ENCODE measurements at regions of chr1 and their contacts with region 1.

Region 1: DNA sequence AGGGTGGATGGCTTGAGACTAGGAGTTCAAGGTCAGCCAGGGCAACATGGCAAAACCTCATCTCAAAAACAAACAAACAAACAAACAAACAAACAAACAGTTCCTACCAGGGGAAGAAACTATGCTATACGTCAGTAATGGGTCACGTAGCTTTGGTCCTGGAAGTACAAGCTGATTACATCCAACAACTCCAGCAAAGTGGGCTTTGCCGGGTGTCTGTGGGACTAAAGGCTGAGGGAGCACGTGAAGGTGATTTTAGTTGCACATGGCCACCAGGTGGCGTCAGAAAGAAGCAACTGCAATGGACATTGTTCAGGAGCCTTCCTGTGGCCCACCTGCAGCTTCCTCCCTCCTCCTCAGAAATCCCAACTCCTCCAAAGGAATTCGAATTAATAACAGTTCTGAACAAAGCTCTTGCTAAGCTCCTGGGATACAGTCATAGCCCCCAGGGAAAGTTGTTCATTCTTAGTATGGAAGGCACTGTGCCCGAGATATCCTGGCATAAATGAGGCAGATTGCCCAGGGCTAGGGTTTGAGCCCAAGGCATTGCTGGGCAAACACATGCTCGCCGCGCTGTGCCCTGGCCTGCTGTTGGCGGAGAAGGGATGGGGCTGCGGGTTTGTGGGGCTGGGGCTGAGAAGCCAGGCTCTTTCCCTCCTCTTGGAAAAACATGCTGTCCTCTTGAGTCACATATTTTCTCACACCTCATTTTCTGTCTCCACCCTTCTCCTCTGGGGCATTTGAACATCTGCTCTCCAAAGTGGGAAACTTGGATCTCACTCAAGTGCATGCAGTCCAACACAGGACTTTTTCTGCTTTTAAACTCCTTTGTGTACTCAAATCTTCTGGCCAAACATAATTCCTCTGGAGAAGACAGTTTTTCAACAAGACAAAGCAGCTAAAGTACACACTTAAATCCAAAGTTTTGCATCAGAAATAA is 28.6 kb downstream of the AKNAD1 start:
- DNase-seq: peak; percentile 96
- H3K4me3 Mint-ChIP-seq: peak overlapping the region; percentile 59
- H3K27ac Mint-ChIP-seq: peak overlapping the region; percentile 94
- H3K4me1 Mint-ChIP-seq: peaks cover 47% of the 10 kb centered on the region
- H3K27me3 Mint-ChIP-seq: no peaks in the 10 kb centered on the region
- CTCF ChIP-seq: peak; percentile 75

Region 2: DNA sequence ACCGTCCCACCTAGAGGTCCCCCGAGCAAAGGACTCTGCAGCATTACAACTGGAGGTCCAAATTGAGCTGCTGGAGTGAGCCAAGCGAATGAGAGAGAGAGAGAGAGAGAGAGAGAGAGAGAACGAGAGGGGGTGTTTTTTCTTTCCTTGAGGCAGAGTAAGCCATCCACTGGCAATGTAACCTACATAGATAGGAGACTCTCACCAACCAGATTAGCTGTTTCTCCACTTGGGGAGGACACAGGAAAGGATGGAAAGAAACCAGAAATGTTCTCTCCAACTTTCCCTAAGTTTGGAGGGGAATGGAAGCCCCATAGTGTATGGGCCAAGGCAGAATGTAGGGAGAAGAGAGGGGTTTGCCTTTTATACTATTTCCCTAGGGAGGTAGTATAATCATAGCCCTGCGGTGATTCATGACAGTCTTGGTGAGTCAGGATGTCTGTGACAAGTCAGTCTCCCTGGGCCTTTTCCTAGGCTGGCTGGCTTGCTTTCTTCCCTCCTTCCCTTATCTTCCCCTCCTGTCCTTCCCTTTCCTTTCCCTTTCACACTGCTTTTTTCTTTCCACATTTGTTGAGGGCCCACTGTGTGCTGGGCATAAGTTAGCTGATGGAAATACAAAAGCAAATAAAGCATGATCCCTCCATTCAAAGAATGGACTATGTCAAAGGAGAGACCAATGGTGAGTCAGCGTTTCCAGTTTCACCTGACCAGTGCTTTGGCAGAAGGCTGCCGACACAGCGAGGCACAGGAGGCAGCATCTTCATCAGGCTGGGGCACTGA is 108.4 kb before region 1 on chr1:
- CTCF ChIA-PET with region 1: no interaction called
- POLR2A ChIA-PET with region 1: no interaction called
- intact Hi-C with region 1: no loop called
- DNase-seq: peak; percentile 88
- H3K4me3 Mint-ChIP-seq: peak overlapping the region; percentile 10
- H3K27ac Mint-ChIP-seq: peak overlapping the region; percentile 78
- H3K4me1 Mint-ChIP-seq: peaks cover 17% of the 10 kb centered on the region
- H3K27me3 Mint-ChIP-seq: no peaks in the 10 kb centered on the region
- CTCF ChIP-seq: no peak

Region 3: DNA sequence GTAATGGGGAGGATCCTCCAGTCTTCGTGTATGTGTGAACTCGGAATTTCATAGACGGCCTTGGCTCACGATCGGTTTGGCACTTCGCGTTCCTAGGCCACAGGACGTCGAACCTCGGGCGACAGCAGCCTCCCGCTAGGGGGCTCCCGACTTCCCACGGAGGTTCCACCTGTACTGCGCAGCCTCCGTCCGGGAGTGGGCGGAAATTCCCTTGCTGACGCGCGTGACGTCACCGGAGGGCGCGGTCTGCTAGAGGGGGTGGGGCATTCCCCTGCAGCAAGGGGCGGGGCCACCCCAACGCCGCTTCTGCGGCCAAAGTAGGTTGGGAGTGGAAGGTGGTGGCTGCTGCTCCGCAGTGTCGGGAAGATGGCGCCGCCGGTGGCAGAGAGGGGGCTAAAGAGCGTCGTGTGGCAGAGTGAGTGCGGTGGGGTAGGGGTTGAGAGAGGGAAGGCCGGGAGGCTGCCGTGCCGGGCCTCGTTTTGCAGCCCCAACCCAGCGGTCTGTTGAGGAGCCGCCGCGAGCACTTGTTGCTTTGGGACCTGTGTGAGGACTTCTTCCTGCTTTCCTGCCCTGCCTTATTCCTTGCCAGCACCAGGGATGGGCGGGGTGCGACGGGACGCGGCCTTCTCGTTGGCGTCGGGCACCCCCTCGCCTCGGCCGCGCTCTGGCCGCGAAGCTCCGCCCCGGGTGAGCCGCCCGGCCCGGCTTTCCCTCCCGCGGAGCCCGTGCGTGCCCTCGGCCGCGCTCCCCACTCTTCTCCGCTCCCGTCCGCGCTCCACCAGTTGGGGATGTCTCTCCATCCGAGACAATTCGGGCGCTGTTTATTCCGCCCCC is 81.7 kb before region 1 on chr1 and contains the start of gene STXBP3:
- CTCF ChIA-PET with region 1: interaction called, 3 read pairs
- POLR2A ChIA-PET with region 1: interaction called, 3 read pairs
- intact Hi-C with region 1: loop called (anchors 5 kb)
- DNase-seq: peak; percentile 97
- H3K4me3 Mint-ChIP-seq: peak within 1 kb of the TSS; percentile 92
- H3K27ac Mint-ChIP-seq: peak within 1 kb of the TSS; percentile 98
- H3K4me1 Mint-ChIP-seq: peaks cover 12% of the 10 kb centered on the region
- H3K27me3 Mint-ChIP-seq: no peaks in the 10 kb centered on the region
- CTCF ChIP-seq: peak; percentile 89
- total RNA-seq, gene STXBP3: 47.4 and 58.4 TPM in 2 replicates

Region 4: DNA sequence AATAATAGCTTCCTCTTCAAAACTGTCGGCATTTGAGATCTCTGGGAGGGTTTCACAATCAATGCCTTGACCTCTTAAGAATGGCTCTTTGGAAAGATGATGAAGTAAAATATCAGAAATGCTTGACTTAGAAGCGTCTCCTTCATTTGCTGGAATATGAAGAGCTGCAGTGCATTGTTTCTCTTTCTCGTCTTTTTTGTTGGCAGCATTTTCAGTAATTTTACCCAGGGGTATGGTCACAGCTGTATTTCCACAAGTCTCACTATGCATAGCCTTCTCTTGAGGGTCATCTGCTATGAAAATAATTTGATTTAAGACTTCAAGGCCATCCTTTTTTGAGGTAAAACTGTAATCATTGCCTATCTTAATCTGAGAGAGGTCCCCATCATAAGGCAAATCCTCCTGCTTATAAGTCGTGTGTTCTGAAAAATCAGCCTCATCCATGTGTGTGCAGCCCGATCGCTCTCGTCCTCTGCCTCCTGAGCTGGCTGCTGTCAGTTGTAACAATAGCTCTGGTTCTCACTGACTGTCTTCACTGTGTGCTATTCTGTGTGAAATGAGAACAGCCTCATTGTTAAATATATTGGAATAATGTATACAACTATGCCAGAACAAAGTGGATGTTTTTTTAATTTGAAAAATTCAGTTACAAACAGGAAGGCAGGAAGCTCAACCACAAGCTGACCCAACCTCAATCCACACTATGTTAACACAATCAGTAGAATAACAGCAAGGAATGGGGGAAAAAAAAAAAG is 24.1 kb after region 1 on chr1:
- CTCF ChIA-PET with region 1: interaction called, 36 read pairs
- POLR2A ChIA-PET with region 1: interaction called, 223 read pairs
- intact Hi-C with region 1: no loop called
- DNase-seq: no peak
- H3K4me3 Mint-ChIP-seq: no peak overlapping the region
- H3K27ac Mint-ChIP-seq: no peak overlapping the region
- H3K4me1 Mint-ChIP-seq: peaks cover 20% of the 10 kb centered on the region
- H3K27me3 Mint-ChIP-seq: no peaks in the 10 kb centered on the region
- CTCF ChIP-seq: no peak

Region 5: DNA sequence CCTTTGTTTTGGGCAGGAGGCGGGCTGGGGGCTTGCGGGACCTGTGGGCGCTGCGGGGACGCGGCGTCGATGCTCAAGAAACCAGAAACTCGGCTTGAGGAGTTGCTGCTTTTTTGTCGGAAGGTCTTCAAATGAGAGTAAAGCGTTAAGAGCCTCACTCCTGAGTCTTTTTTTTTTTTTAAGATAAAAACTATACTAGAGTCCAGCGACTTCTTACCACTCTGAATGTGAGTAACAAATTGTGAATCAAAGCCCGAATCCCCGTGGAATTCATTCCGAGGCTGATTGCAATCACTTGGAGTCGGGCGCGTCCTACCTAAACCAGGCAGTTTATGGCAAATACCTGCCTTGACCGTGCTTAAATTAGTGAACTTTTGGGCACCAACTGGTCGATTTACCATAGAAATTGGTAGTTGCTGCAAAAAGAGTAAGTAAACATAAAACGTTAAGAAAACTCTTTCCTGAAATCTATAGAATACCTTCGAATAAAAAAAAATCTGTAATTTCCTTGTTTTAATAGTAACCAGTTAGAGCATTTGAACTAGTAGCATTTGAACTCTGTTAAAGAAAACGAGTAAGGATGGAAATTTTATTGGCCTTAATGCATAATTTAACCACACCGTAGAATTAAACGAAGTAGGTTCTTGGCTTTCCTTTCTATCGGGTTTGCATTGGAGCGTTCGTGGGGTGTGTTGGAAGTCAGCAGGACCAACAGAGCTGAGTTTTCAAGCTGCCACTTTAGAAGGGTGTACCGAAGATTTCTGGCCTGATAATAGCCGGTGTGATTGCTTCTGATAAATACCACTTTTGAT is 49.3 kb after region 1 on chr1:
- CTCF ChIA-PET with region 1: interaction called, 105 read pairs
- POLR2A ChIA-PET with region 1: interaction called, 276 read pairs
- intact Hi-C with region 1: loop called (anchors 1 kb)
- DNase-seq: peak; percentile 48
- H3K4me3 Mint-ChIP-seq: peak overlapping the region; percentile 96
- H3K27ac Mint-ChIP-seq: peak overlapping the region; percentile 96
- H3K4me1 Mint-ChIP-seq: peaks cover 21% of the 10 kb centered on the region
- H3K27me3 Mint-ChIP-seq: no peaks in the 10 kb centered on the region
- CTCF ChIP-seq: no peak

Region 6: DNA sequence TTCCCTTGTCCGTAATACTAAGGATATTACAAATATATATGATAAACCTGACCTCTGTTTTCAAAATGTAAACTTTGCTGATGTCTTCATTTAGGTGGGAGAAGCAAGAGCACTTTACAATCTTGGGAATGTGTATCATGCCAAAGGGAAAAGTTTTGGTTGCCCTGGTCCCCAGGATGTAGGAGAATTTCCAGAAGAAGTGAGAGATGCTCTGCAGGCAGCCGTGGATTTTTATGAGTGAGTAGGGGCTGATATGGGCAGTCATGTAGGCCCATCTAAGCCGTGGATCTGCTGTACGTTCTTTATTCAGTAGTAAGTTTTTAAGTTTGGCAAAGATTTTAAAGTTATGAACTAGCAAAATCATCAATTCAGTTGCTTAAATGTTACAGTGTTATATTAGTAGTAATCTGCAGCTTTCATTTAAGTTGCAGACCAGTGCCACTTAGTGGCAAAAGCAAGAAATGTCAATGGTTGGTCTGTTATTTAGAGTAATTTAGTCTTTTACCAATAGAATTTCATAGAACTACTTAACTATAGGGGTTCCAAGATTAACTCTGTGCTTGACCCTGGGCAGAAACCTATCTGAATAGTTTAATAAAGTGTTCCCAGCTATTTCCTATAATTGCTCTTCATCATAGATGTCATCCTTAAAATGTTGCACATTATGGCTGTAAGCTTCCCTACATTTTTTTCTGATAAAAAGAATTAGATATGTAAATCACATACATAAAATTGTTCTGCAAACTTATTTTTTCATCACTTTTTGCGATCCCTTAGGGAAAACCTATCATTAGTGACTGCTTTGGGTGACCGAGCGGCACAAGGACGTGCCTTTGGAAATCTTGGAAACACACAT is 69.8 kb after region 1 on chr1:
- CTCF ChIA-PET with region 1: interaction called, 255 read pairs
- POLR2A ChIA-PET with region 1: interaction called, 185 read pairs
- intact Hi-C with region 1: loop called (anchors 1 kb)
- DNase-seq: peak; percentile 73
- H3K4me3 Mint-ChIP-seq: no peak overlapping the region
- H3K27ac Mint-ChIP-seq: peak overlapping the region; percentile 23
- H3K4me1 Mint-ChIP-seq: peaks cover 20% of the 10 kb centered on the region
- H3K27me3 Mint-ChIP-seq: no peaks in the 10 kb centered on the region
- CTCF ChIP-seq: peak; percentile 63

Region 7: GRCh38 chr1:109263597-109264398 is 435.5 kb after region 1 on chr1:
- CTCF ChIA-PET with region 1: no interaction called
- POLR2A ChIA-PET with region 1: no interaction called
- intact Hi-C with region 1: loop called (anchors 2 kb)
- DNase-seq: peak; percentile 94
- H3K4me3 Mint-ChIP-seq: peak overlapping the region; percentile 47
- H3K27ac Mint-ChIP-seq: no peak overlapping the region
- H3K4me1 Mint-ChIP-seq: peaks cover 24% of the 10 kb centered on the region
- H3K27me3 Mint-ChIP-seq: no peaks in the 10 kb centered on the region
- CTCF ChIP-seq: peak; percentile 99

Measured in MCF 10A (cell line).